ENCODE measurements at regions of chr5 and their contacts with region 1.

Region 1: GRCh38 chr5:179166886-179167841 is 107.0 kb downstream of the ZNF354C start:
- DNase-seq: peak; percentile 71 to 84 (median 84)
- ATAC-seq: peak; percentile 82 to 87
- H3K4me3 ChIP-seq: no peak overlapping the region
- H3K27ac ChIP-seq: no peak overlapping the region
- H3K4me1 ChIP-seq: no peaks in the 10 kb centered on the region
- H3K27me3 ChIP-seq: no peaks in the 10 kb centered on the region

Region 2: DNA sequence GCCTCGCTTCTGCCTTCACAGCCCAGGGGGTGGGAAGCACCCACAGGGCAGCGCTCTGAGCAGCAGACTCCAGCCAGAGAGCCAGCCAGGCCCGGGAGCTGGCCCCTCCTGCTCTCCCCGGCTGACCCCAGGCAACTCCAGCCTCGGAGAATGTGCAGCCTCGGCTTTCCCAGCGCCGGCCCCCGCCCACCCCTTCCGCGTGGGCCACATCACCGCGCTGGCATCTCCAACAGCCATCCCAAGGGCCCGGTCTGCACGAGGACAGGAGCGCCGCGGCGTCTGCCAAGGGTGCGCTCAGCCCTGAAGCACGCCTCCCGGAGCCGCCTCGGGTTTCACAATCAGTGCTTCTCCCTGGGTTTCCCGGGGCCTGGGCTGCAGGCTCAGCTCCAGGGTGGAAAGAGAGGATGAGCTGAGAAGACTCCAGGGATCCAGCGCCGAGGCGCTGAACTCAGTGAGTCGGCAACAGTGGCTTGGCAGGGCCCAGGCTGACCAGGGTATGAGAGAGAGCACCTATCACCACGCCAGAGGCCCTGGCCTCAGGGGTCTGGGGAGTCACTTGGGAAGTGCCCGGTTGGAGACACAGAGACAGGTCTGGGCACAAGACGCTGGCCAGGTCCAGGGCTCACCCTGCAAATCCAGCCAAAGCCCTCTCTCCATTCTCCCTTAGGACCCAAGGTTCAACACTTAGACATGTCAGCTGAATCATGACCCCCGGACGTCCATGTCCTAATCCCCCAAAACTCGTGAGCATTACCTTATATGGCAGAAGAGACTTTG is 98.5 kb after region 1 on chr5:
- intact Hi-C with region 1: loop called in 1 of 4 experiments (anchors 10 kb)
- DNase-seq: peak; percentile 95 to 98 (median 97)
- ATAC-seq: peak; percentile 92 to 95
- H3K4me3 ChIP-seq: no peak overlapping the region
- H3K27ac ChIP-seq: peak overlapping the region; percentile 55
- H3K4me1 ChIP-seq: peaks cover 2% of the 10 kb centered on the region
- H3K27me3 ChIP-seq: no peaks in the 10 kb centered on the region

Region 3: DNA sequence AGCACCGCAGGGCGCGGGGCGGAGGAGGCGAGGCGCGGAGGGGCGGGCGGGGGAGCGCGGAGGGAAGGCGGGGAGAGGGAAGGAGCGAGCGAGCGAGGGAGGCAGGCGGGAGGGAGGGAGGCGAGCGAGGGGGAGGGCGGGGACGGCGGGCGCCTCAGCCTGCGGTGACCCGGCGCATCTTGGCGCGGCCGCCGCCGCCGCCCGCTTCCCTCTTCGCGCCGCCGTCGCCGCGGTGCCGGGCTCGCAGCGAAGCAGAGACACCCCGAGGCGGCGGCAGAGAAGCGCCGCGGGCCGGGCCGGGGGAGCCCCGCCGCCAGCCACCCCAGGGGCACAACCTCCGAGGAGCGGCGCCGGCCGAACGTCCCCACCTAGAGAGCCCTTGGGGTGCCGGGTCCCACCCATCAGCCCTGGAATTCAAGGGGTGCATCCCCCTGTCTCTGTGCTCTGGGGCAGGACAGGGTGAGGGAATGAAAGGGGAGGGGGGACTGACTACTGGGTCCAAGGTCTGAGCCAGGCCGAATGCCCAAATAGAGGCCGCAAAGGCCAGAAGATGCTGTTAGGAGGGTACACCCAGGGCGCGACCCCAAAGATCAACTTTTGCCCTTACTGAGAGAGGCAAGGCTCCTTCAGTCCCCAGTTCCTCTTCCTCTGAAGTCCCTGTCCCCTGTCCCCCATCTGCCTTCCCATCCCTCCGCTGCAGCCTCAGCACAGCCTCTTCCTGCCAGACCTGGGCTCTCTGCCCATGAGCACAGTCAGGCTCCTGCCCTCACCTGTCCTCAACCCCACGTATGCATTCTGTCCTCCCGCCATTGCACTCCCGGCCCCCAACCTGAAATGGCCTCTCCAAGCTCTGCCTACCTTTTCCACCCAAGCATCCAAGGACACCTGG is 178.5 kb after region 1 on chr5 and contains the start of gene ADAMTS2:
- intact Hi-C with region 1: loop called in 2 of 4 experiments (anchors 5 to 10 kb)
- DNase-seq: peak; percentile 79 to 91 (median 91)
- ATAC-seq: peak; percentile 58 to 71
- H3K4me3 ChIP-seq: peak within 1 kb of the TSS; percentile 78
- H3K27ac ChIP-seq: no peak within 1 kb of the TSS
- H3K4me1 ChIP-seq: no peaks in the 10 kb centered on the region
- H3K27me3 ChIP-seq: no peaks in the 10 kb centered on the region
- total RNA-seq, gene ADAMTS2: 11.9 to 23.2 (median 18.0) TPM

Region 4: DNA sequence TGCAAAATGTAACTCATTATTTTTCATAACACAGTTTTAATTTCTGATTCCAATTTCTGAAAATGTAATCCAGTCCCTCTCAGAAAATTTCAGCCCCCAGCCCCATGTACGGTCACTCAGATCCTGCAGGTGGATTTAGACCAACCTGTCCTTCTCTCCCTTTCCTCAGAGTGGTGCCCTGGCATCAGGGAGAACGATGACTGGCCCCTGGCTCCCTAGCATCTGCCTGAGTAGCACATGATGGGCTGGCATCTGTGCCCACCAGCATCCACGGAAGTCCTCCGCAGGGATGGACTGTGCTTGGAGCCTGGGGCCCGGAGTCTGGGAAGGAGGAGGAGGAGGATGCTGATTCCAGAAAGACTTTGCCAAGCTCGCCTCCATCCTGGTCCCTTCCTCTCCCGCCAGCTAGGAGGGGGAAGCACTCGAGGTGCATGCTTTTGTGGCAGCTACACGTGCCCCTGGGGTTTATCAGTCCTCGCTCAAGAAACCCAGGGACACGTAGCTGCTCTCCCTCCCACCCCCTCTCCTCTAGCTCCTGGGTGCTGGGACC is 328.8 kb after region 1 on chr5:
- intact Hi-C with region 1: loop called (anchors 1 to 5 kb)
- DNase-seq: no peak
- ATAC-seq: no peak
- H3K4me3 ChIP-seq: no peak overlapping the region
- H3K27ac ChIP-seq: no peak overlapping the region
- H3K4me1 ChIP-seq: no peaks in the 10 kb centered on the region
- H3K27me3 ChIP-seq: no peaks in the 10 kb centered on the region

Measured in right cardiac atrium (tissue), 5 donors.